Sciatic nerve (tissue), 2 donors: ENCODE measurements at regions of chr3 and their contacts with region 1.

Region 1: GRCh38 chr3:111803123-111803593 is 55.9 kb upstream of the PHLDB2 start:
- DNase-seq: peak; percentile 81
- ATAC-seq: peak; percentile 93

Region 2: DNA sequence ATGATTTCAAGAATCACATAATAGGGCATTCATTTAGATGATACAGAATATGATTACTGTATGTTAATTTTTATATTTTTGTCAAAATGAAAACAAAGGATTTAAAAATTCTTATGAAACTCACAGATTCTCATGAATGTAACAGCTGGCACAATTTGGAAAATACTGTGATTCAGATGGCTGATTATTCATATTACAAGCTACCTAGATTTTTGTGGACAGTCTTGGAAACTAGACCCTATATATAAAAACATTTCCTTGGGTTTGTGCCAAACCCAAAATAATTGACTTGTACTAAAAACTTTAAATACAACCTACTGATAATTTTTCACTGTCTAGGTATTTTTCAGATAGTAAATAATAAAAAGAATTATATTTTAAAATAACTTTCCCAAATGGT is 234.2 kb before region 1 on chr3:
- intact Hi-C with region 1: loop called (anchors 10 kb)
- DNase-seq: no peak
- ATAC-seq: no peak